ENCODE measurements at regions of chr6 and their contacts with region 1.

Region 1: GRCh38 chr6:49625140-49625539 is 11.5 kb downstream of the RHAG start:
- DNase-seq: no peak

Region 2: GRCh38 chr6:49849213-49849907 is 224.2 kb after region 1 on chr6:
- intact Hi-C with region 1: loop called (anchors 2 kb)
- DNase-seq: no peak